ENCODE measurements at regions of chr7 and their contacts with region 1.

Region 1: DNA sequence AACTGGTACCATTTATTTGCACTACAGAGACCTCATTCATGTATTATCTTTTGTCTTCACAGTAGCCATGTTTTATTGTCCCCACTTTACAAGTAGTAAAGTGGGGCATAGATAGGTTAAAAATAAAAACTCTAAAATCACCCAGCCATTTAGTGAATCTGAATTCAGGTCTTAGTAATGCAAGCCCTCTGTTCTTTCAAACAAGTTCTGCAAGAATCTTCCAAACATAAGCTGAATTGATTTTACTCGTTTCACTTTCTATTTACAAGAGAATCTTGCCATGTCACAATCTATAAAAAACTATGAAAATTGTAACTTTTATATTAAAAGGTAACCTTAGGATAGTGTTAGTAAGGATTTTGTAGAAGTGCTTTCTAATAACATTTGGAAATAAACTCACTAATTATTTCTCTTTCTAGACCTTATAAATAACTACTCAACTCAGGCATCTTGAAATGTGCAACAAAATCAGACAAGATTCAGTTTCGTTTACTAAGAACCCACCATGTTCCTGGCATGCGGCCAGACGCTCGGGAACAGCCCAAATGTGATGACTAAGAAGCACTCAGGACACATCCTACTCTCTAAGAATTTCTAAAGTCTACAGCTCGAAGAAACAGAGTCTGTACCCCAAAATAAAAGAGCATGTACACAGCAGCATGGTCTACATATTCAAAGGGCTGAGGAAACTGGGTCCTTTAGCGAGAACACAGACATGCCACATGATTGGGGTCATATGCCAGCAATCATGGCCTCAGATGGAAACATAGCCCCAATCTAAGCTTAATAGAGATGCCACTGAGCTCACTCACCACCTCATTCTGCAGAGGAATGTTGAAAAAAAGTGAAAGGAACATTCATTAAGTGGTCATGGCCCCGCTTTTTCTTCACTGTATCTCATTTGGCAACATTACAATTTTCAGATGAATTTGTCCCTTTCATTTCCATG is 167.6 kb downstream of the AMPH start:
- DNase-seq: peak; percentile 93
- H3K4me3 Mint-ChIP-seq: peak overlapping the region; percentile 47
- H3K27ac Mint-ChIP-seq: peak overlapping the region; percentile 39
- H3K4me1 Mint-ChIP-seq: peaks cover 18% of the 10 kb centered on the region
- H3K27me3 Mint-ChIP-seq: no peaks in the 10 kb centered on the region

Region 2: DNA sequence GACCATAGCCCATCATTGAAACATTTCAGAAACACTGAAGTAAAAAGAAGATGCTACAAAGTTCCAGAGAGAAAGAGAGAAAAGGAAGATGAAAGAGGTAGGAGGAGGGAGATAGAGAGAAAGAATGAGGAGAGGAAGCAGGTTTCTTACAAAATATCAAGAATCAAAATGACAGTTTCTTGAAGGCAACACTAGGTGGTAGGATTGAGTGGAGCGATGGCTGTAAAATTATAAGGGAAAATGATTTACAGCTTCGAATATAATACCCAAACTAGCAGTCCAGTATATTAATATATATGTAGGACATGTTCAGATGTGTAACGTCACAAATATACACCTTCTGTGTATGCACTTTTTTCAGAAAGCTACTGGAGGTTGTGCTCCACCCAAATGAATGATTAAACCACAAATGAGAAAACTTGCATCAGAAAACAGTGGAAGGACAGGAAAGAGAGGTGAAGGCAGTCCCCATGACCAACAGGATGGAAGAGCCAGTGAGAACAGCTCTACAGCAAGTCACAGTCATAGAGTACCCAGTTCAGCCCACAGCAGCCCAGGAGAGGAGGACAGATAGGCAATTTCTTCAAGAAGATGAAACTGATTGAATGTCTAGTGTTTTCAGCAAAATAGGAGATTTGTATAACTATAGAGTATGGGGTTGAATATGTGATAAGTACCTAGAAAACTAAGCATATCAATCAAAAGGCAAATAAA is 38.6 kb before region 1 on chr7:
- CTCF ChIA-PET with region 1: no interaction called
- POLR2A ChIA-PET with region 1: no interaction called
- intact Hi-C with region 1: loop called (anchors 2 kb)
- DNase-seq: no peak
- H3K4me3 Mint-ChIP-seq: no peak overlapping the region
- H3K27ac Mint-ChIP-seq: no peak overlapping the region
- H3K4me1 Mint-ChIP-seq: peaks cover 39% of the 10 kb centered on the region
- H3K27me3 Mint-ChIP-seq: no peaks in the 10 kb centered on the region

Region 3: DNA sequence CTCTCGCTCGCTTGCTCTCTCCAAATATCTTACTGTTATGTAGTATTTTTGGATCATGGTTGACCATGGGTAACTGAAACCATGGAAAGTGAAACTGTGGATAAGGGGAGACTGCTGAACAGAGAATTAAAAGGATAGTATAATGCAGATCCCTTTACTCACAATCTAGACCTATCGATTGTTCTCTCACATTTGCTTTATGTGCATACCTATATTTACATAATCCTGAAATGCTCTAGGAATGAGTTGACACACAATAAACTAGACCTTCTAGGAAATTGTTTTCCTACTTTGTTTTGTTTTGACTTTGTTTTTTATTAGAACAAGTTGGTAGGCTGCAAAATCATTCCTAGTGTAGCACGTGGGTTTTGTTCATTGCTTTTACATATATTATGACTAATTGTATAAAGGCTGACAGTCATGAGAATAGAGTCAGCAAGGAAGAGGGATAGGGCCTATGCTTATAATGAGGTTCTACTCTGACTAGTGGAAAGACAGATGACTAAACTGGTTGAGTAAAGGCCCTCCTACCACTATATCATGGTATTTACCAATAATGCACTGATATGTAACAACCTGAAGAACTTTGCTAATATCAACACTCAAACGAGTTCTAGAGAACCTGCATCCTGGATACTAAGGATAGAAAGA is 14.8 kb before region 1 on chr7:
- CTCF ChIA-PET with region 1: no interaction called
- POLR2A ChIA-PET with region 1: interaction called, 3 read pairs
- intact Hi-C with region 1: loop called (anchors 1 kb)
- DNase-seq: no peak
- H3K4me3 Mint-ChIP-seq: no peak overlapping the region
- H3K27ac Mint-ChIP-seq: no peak overlapping the region
- H3K4me1 Mint-ChIP-seq: no peaks in the 10 kb centered on the region
- H3K27me3 Mint-ChIP-seq: no peaks in the 10 kb centered on the region

Region 4: GRCh38 chr7:38660427-38661099 is 197.0 kb after region 1 on chr7:
- CTCF ChIA-PET with region 1: no interaction called
- POLR2A ChIA-PET with region 1: no interaction called
- intact Hi-C with region 1: no loop called
- DNase-seq: peak; percentile 34
- H3K4me3 Mint-ChIP-seq: no peak overlapping the region
- H3K27ac Mint-ChIP-seq: no peak overlapping the region
- H3K4me1 Mint-ChIP-seq: no peaks in the 10 kb centered on the region
- H3K27me3 Mint-ChIP-seq: peaks cover 10% of the 10 kb centered on the region

Region 5: DNA sequence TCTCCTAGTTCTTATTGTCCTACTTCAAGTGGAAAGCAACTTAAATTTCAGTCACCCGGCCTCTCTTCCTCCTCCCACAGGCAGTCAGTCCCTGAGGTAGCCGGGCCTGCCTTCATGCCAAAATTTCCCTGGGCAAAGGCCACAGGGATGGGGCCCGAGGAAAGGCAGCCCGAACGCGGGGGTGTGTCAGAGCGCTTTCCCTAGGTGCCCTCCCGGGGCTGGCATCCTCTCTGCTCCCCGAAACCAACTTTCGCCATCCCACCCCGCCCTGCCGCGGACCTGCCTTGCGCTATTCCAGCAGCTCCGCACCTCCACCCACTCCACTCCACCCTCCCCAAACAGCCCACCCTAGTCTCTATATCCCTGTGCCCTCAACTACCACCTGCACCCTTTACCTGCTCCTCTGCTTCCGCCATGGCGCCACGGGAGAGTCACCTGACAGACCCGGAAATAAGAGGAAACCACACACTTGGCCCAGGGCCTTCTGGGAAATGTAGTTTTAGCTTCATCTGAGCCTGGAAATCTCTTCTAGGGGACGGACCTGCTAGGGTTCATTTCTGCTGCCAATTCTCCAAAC is 445.3 kb after region 1 on chr7 and contains the start of gene VPS41:
- CTCF ChIA-PET with region 1: no interaction called
- POLR2A ChIA-PET with region 1: no interaction called
- intact Hi-C with region 1: loop called (anchors 2 kb)
- DNase-seq: peak; percentile 86
- H3K4me3 Mint-ChIP-seq: peak within 1 kb of the TSS; percentile 91
- H3K27ac Mint-ChIP-seq: peak within 1 kb of the TSS; percentile 68
- H3K4me1 Mint-ChIP-seq: peaks cover 37% of the 10 kb centered on the region
- H3K27me3 Mint-ChIP-seq: no peaks in the 10 kb centered on the region
- total RNA-seq, gene VPS41: 62.9 to 66.8 TPM

Measured in activated CD4-positive, alpha-beta memory T cell treated with anti-CD3 and anti-CD28 coated beads for 36 hours (primary cell).